ENCODE measurements at regions of chr2 and their contacts with region 1.

Region 1: DNA sequence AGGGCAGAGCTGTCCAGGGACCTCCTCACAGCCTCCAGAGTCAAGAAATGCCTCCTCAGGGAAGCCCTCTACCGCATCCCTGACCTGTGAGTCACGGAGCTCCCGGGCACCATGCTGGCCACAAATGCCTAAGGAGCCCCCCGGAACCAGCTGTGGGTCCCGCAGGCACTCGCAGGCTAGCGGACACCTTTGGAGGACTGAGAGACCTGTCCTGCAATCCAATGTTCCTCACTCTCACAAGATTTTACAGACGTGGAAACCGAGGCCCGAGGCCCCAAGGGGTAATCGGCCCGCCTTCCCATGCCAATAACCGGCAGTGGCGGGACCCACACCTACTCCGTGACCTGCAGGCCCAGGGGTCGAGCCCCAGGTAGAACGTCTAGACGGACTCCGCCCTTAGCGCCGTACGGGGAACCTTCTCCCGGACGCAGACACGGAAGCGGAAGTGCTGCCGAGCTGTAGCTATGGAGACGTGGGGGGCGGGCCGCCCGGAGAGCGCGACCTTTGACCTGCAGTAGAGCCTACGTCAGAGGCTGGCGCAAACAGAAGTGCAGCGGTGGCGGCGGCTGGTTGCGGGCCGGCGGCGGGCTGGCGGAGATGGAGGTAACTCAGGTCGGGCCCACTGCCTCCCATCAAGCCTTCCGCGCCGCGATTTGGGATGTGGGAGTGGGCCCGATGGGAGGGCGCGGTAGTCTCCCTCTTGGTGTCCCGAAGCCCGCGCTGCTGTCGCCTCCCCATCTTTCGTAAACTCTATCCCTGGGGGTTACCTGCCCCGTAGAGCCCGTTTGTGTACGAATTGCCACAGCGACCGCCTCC is at the start of gene GCC2:
- DNase-seq: peak; percentile 94
- ATAC-seq: peak; percentile 97
- H3K4me3 ChIP-seq: peak within 1 kb of the TSS; percentile 97
- H3K27ac ChIP-seq: peak within 1 kb of the TSS; percentile 65
- H3K4me1 ChIP-seq: peaks cover 10% of the 10 kb centered on the region; the same call in 1 of the 2 replicates
- H3K27me3 ChIP-seq: no peaks in the 10 kb centered on the region
- CTCF ChIP-seq: no peak
- total RNA-seq, gene GCC2: 7.3 and 10.1 TPM in 2 replicates

Region 2: GRCh38 chr2:108271691-108272253 is 177.1 kb before region 1 on chr2:
- CTCF ChIA-PET with region 1: no interaction called
- POLR2A ChIA-PET with region 1: no interaction called
- intact Hi-C with region 1: loop called (anchors 1 kb)
- DNase-seq: peak; percentile 86
- ATAC-seq: peak; percentile 78
- H3K4me3 ChIP-seq: peak overlapping the region; percentile 60
- H3K27ac ChIP-seq: peak overlapping the region; percentile 73
- H3K4me1 ChIP-seq: peaks cover 37% of the 10 kb centered on the region
- H3K27me3 ChIP-seq: no peaks in the 10 kb centered on the region
- CTCF ChIP-seq: no peak

Region 3: DNA sequence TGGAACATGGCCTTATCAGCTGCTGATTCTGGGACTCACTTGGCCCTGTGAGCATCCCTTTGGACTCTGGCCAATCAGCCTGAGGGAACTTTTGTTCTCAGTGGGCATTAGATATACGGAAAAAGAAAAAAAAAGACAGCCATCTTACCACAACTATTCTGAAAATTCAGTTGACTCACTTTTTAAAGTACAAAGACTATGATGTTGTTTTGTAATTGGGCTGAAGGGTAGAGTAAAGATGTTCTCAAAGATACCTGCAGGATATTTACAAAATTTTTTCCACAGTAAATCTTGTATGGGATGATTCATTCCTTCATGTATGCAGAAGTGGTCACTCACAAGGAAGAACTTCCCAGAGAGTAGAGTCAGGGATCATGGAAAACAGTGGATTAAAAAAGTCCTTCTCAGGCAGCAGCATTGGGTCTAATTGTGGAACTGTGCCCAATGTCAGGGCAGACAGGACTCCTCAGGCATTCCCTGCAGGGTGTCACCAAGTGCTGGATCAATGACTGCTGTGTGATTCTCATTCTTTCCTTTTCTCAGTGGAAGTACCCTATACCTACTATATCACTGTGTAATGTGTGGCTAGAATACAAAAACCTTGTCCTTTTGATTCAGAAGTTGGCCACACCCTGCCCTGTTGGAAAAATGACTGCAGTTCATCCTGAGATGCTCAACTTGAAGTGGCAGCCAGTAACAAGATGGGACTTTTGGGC is 35.7 kb before region 1 on chr2:
- CTCF ChIA-PET with region 1: no interaction called
- POLR2A ChIA-PET with region 1: no interaction called
- intact Hi-C with region 1: loop called (anchors 2 kb)
- DNase-seq: peak; percentile 98
- ATAC-seq: peak; percentile 80
- H3K4me3 ChIP-seq: peak overlapping the region; percentile 18; the same call in 1 of the 2 replicates
- H3K27ac ChIP-seq: peak overlapping the region; percentile 97
- H3K4me1 ChIP-seq: peaks cover 34% of the 10 kb centered on the region
- H3K27me3 ChIP-seq: no peaks in the 10 kb centered on the region
- CTCF ChIP-seq: no peak